ENCODE measurements at regions of chr10 and their contacts with region 1.

Region 1: GRCh38 chr10:14389978-14390590 is 59.4 kb upstream of the FRMD4A start:
- DNase-seq: peak; percentile 14
- H3K4me3 Mint-ChIP-seq: no peak overlapping the region
- H3K27ac Mint-ChIP-seq: peak overlapping the region; percentile 58
- H3K4me1 Mint-ChIP-seq: peaks cover 33% of the 10 kb centered on the region
- H3K27me3 Mint-ChIP-seq: peaks cover 43% of the 10 kb centered on the region

Region 2: GRCh38 chr10:14009371-14010100 is 380.5 kb before region 1 on chr10:
- intact Hi-C with region 1: loop called (anchors 1 kb)
- DNase-seq: peak; percentile 37
- H3K4me3 Mint-ChIP-seq: peak overlapping the region; percentile 81
- H3K27ac Mint-ChIP-seq: peak overlapping the region; percentile 74
- H3K4me1 Mint-ChIP-seq: peaks cover 33% of the 10 kb centered on the region
- H3K27me3 Mint-ChIP-seq: peaks cover 19% of the 10 kb centered on the region

Region 3: GRCh38 chr10:14371581-14371980 is 18.5 kb before region 1 on chr10:
- intact Hi-C with region 1: no loop called
- DNase-seq: no peak
- H3K4me3 Mint-ChIP-seq: no peak overlapping the region
- H3K27ac Mint-ChIP-seq: no peak overlapping the region
- H3K4me1 Mint-ChIP-seq: no peaks in the 10 kb centered on the region
- H3K27me3 Mint-ChIP-seq: peaks cover 18% of the 10 kb centered on the region

Region 4: DNA sequence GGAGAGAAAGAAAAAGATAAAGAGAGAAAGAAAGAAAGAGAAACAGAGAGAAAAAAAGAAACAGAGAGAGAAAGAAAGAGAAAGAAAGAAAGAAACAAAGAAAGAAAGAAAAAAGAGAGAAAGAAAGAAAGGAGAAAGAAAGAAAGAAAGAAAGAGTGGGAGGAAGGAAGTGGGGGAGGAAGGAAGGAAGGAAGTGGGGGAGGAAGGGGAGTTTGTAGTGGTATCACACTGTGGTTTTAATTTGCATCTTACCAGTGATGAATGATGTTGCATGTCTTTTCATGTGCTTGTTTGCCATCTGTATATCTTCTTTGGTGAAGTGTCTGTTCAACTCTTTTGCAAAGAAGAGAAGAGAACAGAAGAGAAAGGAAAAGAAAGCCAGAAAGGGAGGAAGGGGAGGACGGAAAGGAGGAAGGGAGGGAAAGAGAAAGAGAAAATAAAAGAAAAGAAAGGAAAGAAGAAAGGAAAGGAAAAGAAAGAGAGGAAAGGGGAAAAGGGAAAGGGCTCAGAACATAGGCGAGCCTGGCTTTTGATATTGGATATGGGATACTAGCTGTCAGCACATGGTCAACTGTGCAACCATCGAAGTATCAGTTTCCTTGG is 19.9 kb after region 1 on chr10:
- intact Hi-C with region 1: loop called (anchors 1 kb)
- DNase-seq: no peak
- H3K4me3 Mint-ChIP-seq: no peak overlapping the region
- H3K27ac Mint-ChIP-seq: peak overlapping the region; percentile 75
- H3K4me1 Mint-ChIP-seq: peaks cover 10% of the 10 kb centered on the region
- H3K27me3 Mint-ChIP-seq: peaks cover 28% of the 10 kb centered on the region

Measured in activated T-helper 1 cell treated with anti-CD3 and anti-CD28 coated beads, Interleukin-12 subunit alpha, Interleukin-12 subunit beta, Interleukin-2, Interleukin-4 antibody, amounts not matched to agents 30 ng/mL and 10 ng/mL and 1 ng/mL, durations not matched to agents 14 hours and 24 hours and 36 hours (primary cell).